ENCODE measurements at regions of chr3 and their contacts with region 1.

Region 1: DNA sequence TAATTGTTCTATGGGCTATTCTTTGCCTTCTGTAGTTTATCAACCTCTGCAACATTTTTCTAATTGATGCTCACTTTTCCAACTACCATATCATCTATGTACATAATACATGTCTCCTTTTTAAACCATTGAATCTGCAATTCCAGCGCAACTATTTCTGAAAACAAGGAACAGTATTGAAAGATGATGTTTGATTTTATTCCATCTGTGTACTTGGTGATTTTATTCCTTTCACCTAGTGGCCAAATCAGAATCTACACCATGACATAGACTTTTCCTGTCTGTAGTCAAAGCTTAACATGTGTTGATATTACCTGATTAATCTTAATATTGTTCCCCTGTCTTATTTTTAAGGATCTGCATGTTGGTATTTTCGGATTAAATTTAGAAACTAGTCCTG is 13.0 kb downstream of the NKTR start:
- DNase-seq: no peak
- ATAC-seq: peak; percentile 70
- H3K4me3 ChIP-seq: no peak overlapping the region
- H3K27ac ChIP-seq: no peak overlapping the region
- H3K4me1 ChIP-seq: peaks cover 3% of the 10 kb centered on the region; the same call in 1 of the 2 replicates
- H3K27me3 ChIP-seq: no peaks in the 10 kb centered on the region
- CTCF ChIP-seq: peak; percentile 16 to 36 (median 34); a peak in 4 of 6 replicates
- EP300 ChIP-seq: no peak
- POLR2A ChIP-seq: no peak
- RAD21 ChIP-seq: no peak

Region 2: GRCh38 chr3:42376344-42376798 is 237.1 kb before region 1 on chr3:
- CTCF ChIA-PET with region 1: no interaction called
- POLR2A ChIA-PET with region 1: no interaction called
- RAD21 ChIA-PET with region 1: no interaction called
- SMC1A ChIA-PET with region 1: no interaction called
- in situ Hi-C with region 1: no loop called
- intact Hi-C with region 1: no loop called
- DNase-seq: no peak
- ATAC-seq: no peak
- H3K4me3 ChIP-seq: no peak overlapping the region
- H3K27ac ChIP-seq: no peak overlapping the region
- H3K4me1 ChIP-seq: no peaks in the 10 kb centered on the region
- H3K27me3 ChIP-seq: no peaks in the 10 kb centered on the region
- CTCF ChIP-seq: no peak
- EP300 ChIP-seq: no peak
- POLR2A ChIP-seq: no peak
- RAD21 ChIP-seq: no peak

Region 3: GRCh38 chr3:42572278-42572677 is 41.2 kb before region 1 on chr3:
- CTCF ChIA-PET with region 1: interaction called, 11 read pairs
- POLR2A ChIA-PET with region 1: no interaction called
- RAD21 ChIA-PET with region 1: no interaction called
- SMC1A ChIA-PET with region 1: no interaction called
- in situ Hi-C with region 1: no loop called
- intact Hi-C with region 1: no loop called
- DNase-seq: no peak
- ATAC-seq: peak; percentile 96
- H3K4me3 ChIP-seq: no peak overlapping the region
- H3K27ac ChIP-seq: no peak overlapping the region
- H3K4me1 ChIP-seq: no peaks in the 10 kb centered on the region
- H3K27me3 ChIP-seq: no peaks in the 10 kb centered on the region
- CTCF ChIP-seq: peak; percentile 62 to 72 (median 69)
- EP300 ChIP-seq: no peak
- POLR2A ChIP-seq: no peak
- RAD21 ChIP-seq: peak; percentile 57

Region 4: GRCh38 chr3:42590989-42591756 is 22.3 kb before region 1 on chr3:
- CTCF ChIA-PET with region 1: interaction called, 10 read pairs
- POLR2A ChIA-PET with region 1: interaction called, 5 read pairs
- RAD21 ChIA-PET with region 1: interaction called, 4 read pairs
- SMC1A ChIA-PET with region 1: interaction called, 11 read pairs
- in situ Hi-C with region 1: no loop called
- intact Hi-C with region 1: no loop called
- DNase-seq: no peak
- ATAC-seq: peak; percentile 11
- H3K4me3 ChIP-seq: peak overlapping the region; percentile 95
- H3K27ac ChIP-seq: peak overlapping the region; percentile 75
- H3K4me1 ChIP-seq: peaks cover 12% of the 10 kb centered on the region
- H3K27me3 ChIP-seq: no peaks in the 10 kb centered on the region
- CTCF ChIP-seq: no peak
- EP300 ChIP-seq: no peak
- POLR2A ChIP-seq: no peak
- RAD21 ChIP-seq: no peak

Region 5: GRCh38 chr3:42600111-42600988 is 13.1 kb before region 1 on chr3 and contains the start of gene NKTR:
- CTCF ChIA-PET with region 1: interaction called, 41 read pairs
- POLR2A ChIA-PET with region 1: interaction called, 12 read pairs
- RAD21 ChIA-PET with region 1: interaction called, 6 read pairs
- SMC1A ChIA-PET with region 1: interaction called, 31 read pairs
- in situ Hi-C with region 1: no loop called
- intact Hi-C with region 1: no loop called
- DNase-seq: peak; percentile 98
- ATAC-seq: peak; percentile 87
- H3K4me3 ChIP-seq: peak within 1 kb of the TSS; percentile 97
- H3K27ac ChIP-seq: peak within 1 kb of the TSS; percentile 95
- H3K4me1 ChIP-seq: peaks cover 3% of the 10 kb centered on the region; the same call in 1 of the 2 replicates
- H3K27me3 ChIP-seq: no peaks in the 10 kb centered on the region
- CTCF ChIP-seq: 0 out of 6 replicates have a peak, but pooled peaks of 2 of the 3 experiments have one; percentile 0 to 1
- EP300 ChIP-seq: no peak
- POLR2A ChIP-seq: peak; percentile 94
- RAD21 ChIP-seq: no peak
- polyA plus RNA-seq, gene NKTR: 15.3 to 27.8 TPM

Region 6: GRCh38 chr3:42635111-42635510 is 21.6 kb after region 1 on chr3:
- CTCF ChIA-PET with region 1: interaction called, 12 read pairs
- POLR2A ChIA-PET with region 1: interaction called, 3 read pairs
- RAD21 ChIA-PET with region 1: no interaction called
- SMC1A ChIA-PET with region 1: interaction called, 3 read pairs
- in situ Hi-C with region 1: no loop called
- intact Hi-C with region 1: no loop called
- DNase-seq: no peak
- ATAC-seq: peak; percentile 81
- H3K4me3 ChIP-seq: no peak overlapping the region
- H3K27ac ChIP-seq: no peak overlapping the region
- H3K4me1 ChIP-seq: peaks cover 17% of the 10 kb centered on the region
- H3K27me3 ChIP-seq: no peaks in the 10 kb centered on the region
- CTCF ChIP-seq: peak in 2 of 3 experiments; percentile 13 to 28; a peak in 1 of 6 replicates
- EP300 ChIP-seq: no peak
- POLR2A ChIP-seq: no peak
- RAD21 ChIP-seq: peak; percentile 50

Measured in GM12878 (cell line).